T-cell (primary cell): ENCODE measurements at regions of chr2 and their contacts with region 1.

Region 1: DNA sequence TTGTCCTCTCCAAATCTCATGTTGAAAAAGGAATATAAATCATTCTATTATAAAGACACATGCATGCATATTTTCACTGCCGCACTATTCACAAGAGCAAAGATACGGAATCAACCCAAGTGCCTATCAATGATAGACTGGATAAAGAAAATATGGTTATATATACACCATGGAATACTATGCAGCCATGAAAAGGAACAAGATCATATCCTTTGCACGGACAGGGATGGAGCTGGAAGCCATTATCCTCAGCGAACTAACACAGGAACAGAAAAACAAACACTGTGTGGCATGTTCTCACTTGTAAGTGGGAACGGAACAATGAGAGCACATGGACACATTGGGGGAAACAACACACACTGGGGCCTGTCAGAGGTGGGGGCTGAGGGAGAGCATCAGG is 28.1 kb upstream of the PARD3B start:
- DNase-seq: no peak
- ATAC-seq: no peak
- H3K4me3 ChIP-seq: no peak overlapping the region
- H3K4me3 Mint-ChIP-seq: no peak overlapping the region
- H3K27ac ChIP-seq: no peak overlapping the region
- H3K27ac Mint-ChIP-seq: no peak overlapping the region
- H3K4me1 ChIP-seq: no peaks in the 10 kb centered on the region
- H3K4me1 Mint-ChIP-seq: no peaks in the 10 kb centered on the region
- H3K27me3 ChIP-seq: no peaks in the 10 kb centered on the region
- H3K27me3 Mint-ChIP-seq: peaks cover 0 to 4% of the 10 kb centered on the region in 2 donors

Region 2: GRCh38 chr2:204340511-204340910 is 176.6 kb before region 1 on chr2:
- CTCF ChIA-PET with region 1: no interaction called
- POLR2A ChIA-PET with region 1: interaction called in 1 of 2 experiments, 13 read pairs
- DNase-seq: no peak
- ATAC-seq: no peak
- H3K4me3 ChIP-seq: no peak overlapping the region
- H3K4me3 Mint-ChIP-seq: no peak overlapping the region
- H3K27ac ChIP-seq: no peak overlapping the region
- H3K27ac Mint-ChIP-seq: no peak overlapping the region
- H3K4me1 ChIP-seq: no peaks in the 10 kb centered on the region
- H3K4me1 Mint-ChIP-seq: no peaks in the 10 kb centered on the region
- H3K27me3 ChIP-seq: peaks cover 0 to 2% of the 10 kb centered on the region in 2 experiments
- H3K27me3 Mint-ChIP-seq: peaks cover 38 to 48% of the 10 kb centered on the region in 2 donors

Region 3: DNA sequence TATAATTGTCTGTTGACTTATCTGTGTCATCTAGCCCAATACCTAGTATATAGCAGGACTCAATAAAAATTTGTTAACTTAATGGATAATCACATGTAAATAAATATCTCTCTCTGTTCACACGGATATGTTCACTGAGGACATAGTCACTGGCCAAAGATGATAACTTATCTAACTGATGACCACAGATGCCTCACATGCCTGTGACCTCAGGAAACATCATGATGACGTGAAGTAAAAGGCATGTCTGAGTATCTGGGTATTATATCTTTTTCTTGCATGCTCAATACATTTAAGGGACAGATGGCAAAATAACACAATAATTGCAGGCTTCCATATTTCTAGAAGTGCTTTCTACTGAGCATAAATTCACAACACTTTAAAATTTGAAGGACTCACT is 13.3 kb before region 1 on chr2:
- CTCF ChIA-PET with region 1: no interaction called
- POLR2A ChIA-PET with region 1: no interaction called
- DNase-seq: no peak
- ATAC-seq: no peak
- H3K4me3 ChIP-seq: no peak overlapping the region
- H3K4me3 Mint-ChIP-seq: no peak overlapping the region
- H3K27ac ChIP-seq: no peak overlapping the region
- H3K27ac Mint-ChIP-seq: no peak overlapping the region
- H3K4me1 ChIP-seq: no peaks in the 10 kb centered on the region
- H3K4me1 Mint-ChIP-seq: no peaks in the 10 kb centered on the region
- H3K27me3 ChIP-seq: no peaks in the 10 kb centered on the region
- H3K27me3 Mint-ChIP-seq: peaks cover 0 to 12% of the 10 kb centered on the region in 2 donors

Region 4: DNA sequence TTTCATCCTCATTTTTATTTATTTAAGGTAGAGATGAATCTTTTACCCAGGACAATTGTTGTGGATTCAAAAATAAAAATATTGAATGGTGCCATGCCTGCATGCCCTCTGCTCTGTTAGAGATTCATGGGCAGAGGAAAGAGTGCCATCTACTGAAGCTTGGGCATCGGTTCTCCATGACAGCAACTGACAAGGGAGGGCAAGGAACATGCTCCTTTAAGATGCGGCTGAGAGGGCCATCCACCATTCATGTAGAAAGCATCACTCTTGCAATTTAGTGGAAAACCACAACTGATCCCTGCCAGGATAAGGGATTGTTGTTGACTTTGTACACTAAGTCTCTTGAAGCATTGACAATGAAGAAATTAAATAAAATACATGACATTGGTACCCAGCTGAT is 108.0 kb after region 1 on chr2:
- CTCF ChIA-PET with region 1: no interaction called
- POLR2A ChIA-PET with region 1: no interaction called
- DNase-seq: no peak
- ATAC-seq: no peak
- H3K4me3 ChIP-seq: no peak overlapping the region
- H3K4me3 Mint-ChIP-seq: no peak overlapping the region
- H3K27ac ChIP-seq: no peak overlapping the region
- H3K27ac Mint-ChIP-seq: no peak overlapping the region
- H3K4me1 ChIP-seq: no peaks in the 10 kb centered on the region
- H3K4me1 Mint-ChIP-seq: no peaks in the 10 kb centered on the region
- H3K27me3 ChIP-seq: no peaks in the 10 kb centered on the region
- H3K27me3 Mint-ChIP-seq: peaks cover 2 to 27% of the 10 kb centered on the region in 2 donors